OCI-LY7 (cell line): ENCODE measurements at regions of chr1 and their contacts with region 1.

Region 1: GRCh38 chr1:93846211-93846991 is 32.6 kb downstream of the DNTTIP2 start:
- DNase-seq: peak; percentile 92
- H3K4me3 ChIP-seq: peak overlapping the region; percentile 75
- H3K27ac ChIP-seq: peak overlapping the region; percentile 84
- H3K4me1 ChIP-seq: peaks cover 29% of the 10 kb centered on the region
- CTCF ChIP-seq: peak; percentile 59

Region 2: DNA sequence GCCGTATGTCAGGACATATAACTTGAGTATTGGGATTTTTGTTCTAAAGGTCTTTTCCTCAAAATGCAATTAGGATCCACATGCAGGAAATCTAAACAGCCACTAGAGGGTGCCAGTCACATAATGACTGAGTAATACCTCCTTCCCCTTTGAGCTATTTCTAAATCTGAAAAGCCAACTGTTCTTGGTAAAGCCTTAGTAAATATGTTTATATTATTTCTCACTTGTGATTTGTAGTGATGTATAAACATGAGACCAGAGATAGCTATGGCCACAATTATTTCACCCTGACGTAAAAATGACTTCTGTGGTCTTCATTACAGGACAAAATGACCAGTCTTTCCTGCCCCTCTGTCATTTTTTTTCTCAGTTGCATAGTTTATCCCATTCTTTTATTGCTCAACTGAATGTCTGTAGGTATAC is 541.7 kb before region 1 on chr1:
- CTCF ChIA-PET with region 1: no interaction called
- POLR2A ChIA-PET with region 1: no interaction called
- intact Hi-C with region 1: loop called (anchors 5 kb)
- DNase-seq: peak; percentile 78
- H3K4me3 ChIP-seq: no peak overlapping the region
- H3K27ac ChIP-seq: no peak overlapping the region
- H3K4me1 ChIP-seq: no peaks in the 10 kb centered on the region
- CTCF ChIP-seq: peak; percentile 98

Region 3: DNA sequence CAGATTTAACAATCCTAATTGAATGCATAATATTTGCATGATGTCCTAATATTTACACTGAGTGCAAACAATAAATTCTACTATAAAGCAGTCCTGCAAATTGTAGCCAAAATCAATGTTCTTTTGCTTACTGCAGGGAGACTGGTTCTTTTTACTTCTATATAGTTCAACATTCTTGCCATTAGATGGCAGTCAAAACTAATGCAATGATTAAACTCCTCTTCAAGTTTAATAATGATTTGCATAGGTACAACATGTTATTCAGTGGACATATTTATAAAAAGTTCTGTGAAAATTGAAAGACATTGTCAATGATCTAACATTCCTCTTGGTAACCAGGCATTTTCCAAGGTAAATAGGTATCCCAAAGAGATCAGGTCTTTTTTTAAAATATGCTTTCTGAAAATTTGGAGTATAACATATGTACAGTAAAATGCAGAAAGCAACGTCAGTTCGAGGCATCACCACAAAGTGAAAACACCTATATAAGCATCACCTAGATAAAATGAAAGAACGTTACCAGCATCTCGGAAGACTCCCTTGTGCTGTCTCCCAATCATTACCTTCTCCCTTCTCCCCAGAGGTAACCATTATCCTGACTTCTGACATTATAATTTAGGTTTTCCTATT is 408.3 kb before region 1 on chr1:
- CTCF ChIA-PET with region 1: no interaction called
- POLR2A ChIA-PET with region 1: no interaction called
- intact Hi-C with region 1: loop called (anchors 2 kb)
- DNase-seq: peak; percentile 53
- H3K4me3 ChIP-seq: no peak overlapping the region
- H3K27ac ChIP-seq: no peak overlapping the region
- H3K4me1 ChIP-seq: no peaks in the 10 kb centered on the region
- CTCF ChIP-seq: peak; percentile 89

Region 4: DNA sequence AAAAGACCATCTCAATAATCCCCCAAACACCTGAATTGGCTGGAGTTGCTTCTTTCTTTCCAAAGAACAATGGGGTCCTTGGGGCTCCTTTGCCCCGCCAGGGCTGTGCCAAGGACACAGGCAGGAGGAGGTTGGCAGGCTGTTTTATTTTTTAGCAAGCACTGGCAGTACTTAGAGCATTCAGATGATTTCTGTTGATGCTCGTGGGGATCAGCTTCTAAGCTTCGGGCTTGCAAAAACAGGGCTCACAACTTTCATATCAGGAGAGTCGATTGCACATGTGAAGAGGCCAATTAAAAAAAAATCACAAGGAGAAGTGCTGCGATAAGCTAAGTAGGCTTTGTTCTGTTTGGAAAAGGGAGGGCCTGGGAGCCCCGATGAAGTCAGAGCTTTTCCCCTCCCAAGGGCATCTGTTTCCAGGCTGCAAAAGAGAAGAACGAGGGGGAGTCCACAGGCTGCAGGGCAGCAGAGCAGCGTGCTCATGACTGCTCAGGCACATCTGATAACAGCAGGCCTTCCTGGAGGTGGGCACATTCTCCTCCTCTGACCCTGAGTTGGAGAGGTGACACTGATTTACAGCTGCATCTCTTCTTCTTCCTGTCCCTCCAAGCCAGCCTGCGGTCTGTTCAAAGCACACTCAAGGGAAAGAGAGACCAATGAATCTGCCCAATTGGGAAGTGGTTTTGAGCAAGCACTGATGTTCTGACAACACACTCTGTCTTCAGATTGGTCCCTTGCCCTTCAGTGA is 137.5 kb before region 1 on chr1:
- CTCF ChIA-PET with region 1: no interaction called
- POLR2A ChIA-PET with region 1: interaction called, 4 read pairs
- intact Hi-C with region 1: loop called (anchors 5 kb)
- DNase-seq: peak; percentile 62
- H3K4me3 ChIP-seq: peak overlapping the region; percentile 51
- H3K27ac ChIP-seq: peak overlapping the region; percentile 98
- H3K4me1 ChIP-seq: peaks cover 95% of the 10 kb centered on the region
- CTCF ChIP-seq: no peak

Region 5: GRCh38 chr1:93909146-93910050 is 63.0 kb after region 1 on chr1 and contains the start of gene GCLM:
- CTCF ChIA-PET with region 1: interaction called, 3 read pairs
- POLR2A ChIA-PET with region 1: no interaction called
- intact Hi-C with region 1: loop called (anchors 1 kb)
- DNase-seq: peak; percentile 93
- H3K4me3 ChIP-seq: peak within 1 kb of the TSS; percentile 96
- H3K27ac ChIP-seq: peak within 1 kb of the TSS; percentile 39
- H3K4me1 ChIP-seq: peaks cover 43% of the 10 kb centered on the region
- CTCF ChIP-seq: peak; percentile 82
- total RNA-seq, gene GCLM: 7.0 and 10.7 TPM in 2 replicates